Activated naive CD4-positive, alpha-beta T cell treated with anti-CD3 and anti-CD28 coated beads for 36 hours (primary cell): ENCODE measurements at regions of chr11 and their contacts with region 1.

Region 1: GRCh38 chr11:1382831-1383607 is 6.7 kb upstream of the BRSK2 start:
- DNase-seq: peak; percentile 82
- H3K4me3 Mint-ChIP-seq: peak overlapping the region; percentile 74
- H3K27ac Mint-ChIP-seq: peak overlapping the region; percentile 74
- H3K4me1 Mint-ChIP-seq: peaks cover 12% of the 10 kb centered on the region
- H3K27me3 Mint-ChIP-seq: no peaks in the 10 kb centered on the region

Region 2: DNA sequence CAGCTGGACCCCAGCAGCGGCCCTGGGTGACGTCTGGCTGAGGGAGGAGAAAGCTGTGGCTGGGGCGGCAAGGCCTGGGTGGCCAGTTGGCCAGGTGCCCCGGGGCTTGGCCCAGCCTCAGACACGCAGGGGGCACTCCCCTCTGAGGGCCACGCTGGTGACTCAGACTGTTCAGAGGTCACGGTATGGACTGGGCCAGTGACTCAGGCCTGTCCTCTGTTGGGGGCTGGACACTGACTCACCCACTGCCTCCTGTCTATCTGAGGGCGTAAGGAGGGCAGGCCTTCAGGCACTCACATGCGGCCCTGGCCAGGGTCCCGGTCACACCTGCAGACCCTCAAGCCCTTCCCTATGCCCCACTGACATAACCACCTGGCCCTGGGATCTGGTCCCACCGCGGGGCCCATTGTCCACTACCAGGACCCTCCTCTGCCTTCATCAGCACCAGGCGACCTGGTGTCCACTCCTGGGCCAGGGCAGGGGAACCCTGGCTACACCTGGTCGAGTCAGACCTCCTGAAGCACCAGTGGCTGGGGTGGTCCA is 229.0 kb before region 1 on chr11:
- CTCF ChIA-PET with region 1: no interaction called
- intact Hi-C with region 1: no loop called
- DNase-seq: no peak
- H3K4me3 Mint-ChIP-seq: no peak overlapping the region
- H3K27ac Mint-ChIP-seq: no peak overlapping the region
- H3K4me1 Mint-ChIP-seq: peaks cover 4% of the 10 kb centered on the region
- H3K27me3 Mint-ChIP-seq: peaks cover 5% of the 10 kb centered on the region

Region 3: GRCh38 chr11:1309498-1310317 is 73.3 kb before region 1 on chr11 and contains the start of gene TOLLIP:
- CTCF ChIA-PET with region 1: interaction called, 3 read pairs
- intact Hi-C with region 1: loop called (anchors 1 kb)
- DNase-seq: peak; percentile 97
- H3K4me3 Mint-ChIP-seq: peak within 1 kb of the TSS; percentile 89
- H3K27ac Mint-ChIP-seq: peak within 1 kb of the TSS; percentile 94
- H3K4me1 Mint-ChIP-seq: peaks cover 40% of the 10 kb centered on the region
- H3K27me3 Mint-ChIP-seq: no peaks in the 10 kb centered on the region
- total RNA-seq, gene TOLLIP: 19.9 to 21.7 TPM

Region 4: GRCh38 chr11:1335811-1336761 is 46.9 kb before region 1 on chr11:
- CTCF ChIA-PET with region 1: no interaction called
- intact Hi-C with region 1: loop called (anchors 2 kb)
- DNase-seq: peak; percentile 70
- H3K4me3 Mint-ChIP-seq: peak overlapping the region; percentile 76
- H3K27ac Mint-ChIP-seq: peak overlapping the region; percentile 56
- H3K4me1 Mint-ChIP-seq: peaks cover 10% of the 10 kb centered on the region
- H3K27me3 Mint-ChIP-seq: peaks cover 3% of the 10 kb centered on the region